Left colon (tissue), 2 donors: ENCODE measurements at regions of chr7 and their contacts with region 1.

Region 1: GRCh38 chr7:123797673-123798527 is 47.1 kb upstream of the HYAL4 start:
- DNase-seq: no peak
- ATAC-seq: peak; percentile 80

Region 2: DNA sequence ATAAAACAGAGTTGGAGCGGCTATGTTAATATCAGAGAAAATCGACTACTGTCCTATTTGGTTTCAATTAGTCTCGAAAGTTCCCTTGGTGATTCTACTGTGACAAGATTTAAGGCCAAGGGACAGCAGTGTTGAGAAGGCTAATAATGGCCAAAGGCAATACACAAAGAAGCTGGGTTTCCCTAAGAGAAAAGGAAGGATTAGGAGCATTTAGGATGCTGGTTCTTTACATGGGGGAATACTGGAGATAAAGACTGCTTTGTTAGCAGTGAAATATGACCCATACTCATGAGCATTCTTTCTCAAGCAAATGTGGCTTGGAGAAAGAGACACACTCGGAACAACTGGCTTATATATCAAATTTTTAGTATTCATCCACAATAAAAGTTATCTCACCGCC is 295.7 kb before region 1 on chr7:
- intact Hi-C with region 1: no loop called
- DNase-seq: no peak
- ATAC-seq: no peak

Region 3: DNA sequence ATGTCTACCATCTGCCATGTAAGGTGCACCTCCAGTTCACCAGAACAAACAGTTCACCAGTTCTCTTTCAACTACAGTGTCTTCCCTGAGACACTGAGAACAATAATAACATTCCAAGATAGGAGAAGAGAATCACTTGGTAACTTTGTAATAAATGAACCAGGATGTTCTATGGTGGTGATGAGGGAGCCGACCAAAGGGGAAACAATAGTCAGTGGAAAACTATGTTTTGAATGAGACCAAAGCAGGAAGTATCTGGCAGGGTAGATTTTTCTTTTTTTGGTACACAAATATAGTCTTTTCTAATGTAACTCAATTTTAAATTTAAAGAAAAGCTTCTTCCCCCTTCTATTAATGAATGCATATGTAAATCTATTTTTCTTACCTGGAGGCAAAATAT is 67.1 kb after region 1 on chr7:
- intact Hi-C with region 1: loop called in 1 of 2 experiments (anchors 5 kb)
- DNase-seq: no peak
- ATAC-seq: no peak